Mucosa of descending colon (tissue), 3 donors: ENCODE measurements at regions of chr21 and their contacts with region 1.

Region 1: GRCh38 chr21:17688912-17689874 is 76.5 kb upstream of the BTG3 start:
- DNase-seq: peak; percentile 40 to 53 (median 43)
- ATAC-seq: peak; percentile 45
- H3K4me3 ChIP-seq: no peak overlapping the region
- H3K4me1 ChIP-seq: no peaks in the 10 kb centered on the region
- CTCF ChIP-seq: no peak

Region 2: DNA sequence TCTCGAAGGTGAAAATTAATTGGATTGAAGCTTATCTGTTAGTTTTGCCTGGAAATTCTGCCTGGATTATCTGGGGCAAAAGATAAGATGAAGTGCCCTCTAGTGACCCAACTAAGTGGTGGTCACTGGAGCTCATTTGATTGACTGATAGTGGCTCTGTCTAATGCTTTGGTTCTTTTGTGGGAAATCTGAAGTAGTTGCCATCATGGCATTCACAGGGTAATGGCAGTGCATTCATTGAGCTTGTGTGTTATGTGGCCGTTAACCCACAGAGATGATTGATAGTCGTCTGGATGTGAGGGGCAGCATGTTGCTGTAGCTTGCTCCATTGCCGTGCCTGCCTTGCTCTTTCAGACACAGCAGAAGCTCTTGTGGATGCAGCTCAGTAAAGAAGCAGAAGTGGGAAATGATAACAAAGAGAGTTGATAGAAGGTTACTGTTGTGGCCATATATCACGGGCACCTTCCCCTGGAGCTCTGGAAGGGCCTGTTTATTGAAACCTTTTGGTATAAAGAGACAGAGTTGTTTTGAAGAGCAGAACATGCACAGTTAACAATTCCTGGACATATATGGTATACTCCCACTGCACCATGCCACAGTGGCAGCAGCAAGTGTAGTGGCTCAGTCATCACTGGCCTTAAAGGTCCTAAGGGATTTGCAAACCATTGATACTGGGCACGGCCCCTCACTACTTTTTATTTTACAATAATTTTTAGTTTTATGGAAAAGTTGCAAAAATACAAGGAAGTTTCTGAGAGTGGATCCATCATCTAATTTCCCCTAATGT is 134.3 kb before region 1 on chr21:
- intact Hi-C with region 1: no loop called
- DNase-seq: peak in 1 of 3 donors; percentile 17
- ATAC-seq: peak; percentile 63
- H3K4me3 ChIP-seq: no peak overlapping the region
- H3K4me1 ChIP-seq: no peaks in the 10 kb centered on the region
- CTCF ChIP-seq: no peak

Region 3: DNA sequence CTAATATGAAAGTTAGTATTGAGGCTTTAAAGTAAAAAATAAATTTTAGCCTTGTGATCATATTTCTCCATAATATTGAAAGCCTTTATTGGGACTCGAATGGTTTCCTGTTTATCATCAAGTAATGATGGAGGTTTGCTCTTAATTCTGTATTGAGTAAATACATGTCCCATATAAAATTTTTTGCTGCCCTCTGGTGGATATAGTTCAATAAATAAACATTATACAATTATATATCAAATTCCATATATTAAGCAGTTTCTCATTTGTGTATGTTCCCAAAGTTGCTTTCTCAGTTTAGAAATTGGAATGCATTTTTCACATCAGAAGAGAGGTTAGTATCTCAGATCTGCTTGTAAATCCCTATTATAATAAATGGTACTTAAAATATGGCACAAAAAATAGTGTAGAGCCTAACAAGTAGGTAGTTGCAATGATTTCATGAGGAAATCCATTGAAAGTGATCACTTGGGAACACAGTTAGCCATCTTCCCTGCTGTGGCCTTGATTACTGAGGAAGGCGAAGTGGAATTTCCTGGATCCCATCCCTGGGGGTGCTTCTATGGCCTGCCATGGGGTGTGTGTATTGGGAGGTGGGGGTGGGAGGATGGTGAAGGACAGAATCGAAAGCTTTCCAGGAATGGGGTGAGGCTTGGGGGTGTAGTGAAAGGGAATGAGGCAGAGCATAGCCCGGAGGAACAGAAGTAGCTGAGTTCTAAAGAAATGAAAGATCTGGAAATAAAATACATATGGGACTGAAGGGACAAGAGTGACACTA is 214.0 kb after region 1 on chr21:
- intact Hi-C with region 1: loop called in 1 of 2 experiments (anchors 10 kb)
- DNase-seq: no peak
- ATAC-seq: no peak
- H3K4me3 ChIP-seq: no peak overlapping the region
- H3K4me1 ChIP-seq: no peaks in the 10 kb centered on the region
- CTCF ChIP-seq: no peak